ENCODE measurements at regions of chr2 and their contacts with region 1.

Region 1: DNA sequence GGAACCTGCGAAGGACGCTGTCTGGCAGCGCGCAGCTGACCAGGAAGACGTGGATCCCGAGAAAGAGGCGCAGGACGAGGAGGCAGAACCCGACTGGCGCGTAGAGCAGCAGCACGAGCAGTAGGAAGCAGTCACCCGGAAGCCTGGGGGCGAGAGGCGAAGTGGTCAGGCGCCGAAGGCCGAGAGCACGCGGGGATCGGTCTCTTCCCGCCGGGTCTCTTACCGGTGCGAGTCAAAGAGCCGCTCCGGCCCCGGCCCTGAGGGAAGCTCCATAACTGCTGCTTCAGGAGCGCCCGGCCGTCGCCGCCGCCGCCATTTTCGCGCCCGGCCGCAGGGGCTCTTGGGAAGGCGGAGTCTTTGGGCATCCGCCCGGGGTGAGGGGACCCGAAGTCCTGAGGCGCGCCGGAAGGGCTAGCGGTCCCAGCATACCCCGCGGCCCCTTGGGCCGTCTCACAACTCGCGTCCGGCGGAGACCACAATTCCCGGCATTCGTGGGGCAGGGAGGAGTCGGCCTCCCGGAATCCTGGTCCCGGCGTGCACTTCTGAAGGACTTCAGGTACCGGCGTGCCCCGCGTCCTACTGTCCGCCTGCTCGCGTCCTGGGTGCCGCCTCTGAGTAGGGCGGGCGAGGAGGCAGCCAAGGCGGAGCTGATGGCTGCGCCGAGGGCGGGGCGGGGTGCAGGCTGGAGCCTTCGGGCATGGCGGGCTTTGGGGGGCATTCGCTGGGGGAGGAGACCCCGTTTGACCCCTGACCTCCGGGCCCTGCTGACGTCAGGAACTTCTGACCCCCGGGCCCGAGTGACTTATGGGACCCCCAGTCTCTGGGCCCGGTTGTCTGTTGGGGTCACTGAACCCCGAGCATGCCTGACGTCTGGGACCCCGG is at the starts of genes AUP1 and HTRA2:
- DNase-seq: peak; percentile 83 to 91
- ATAC-seq: peak; percentile 75 to 90 (median 77)
- H3K4me3 ChIP-seq: peak within 1 kb of the TSS; percentile 92
- H3K4me3 Mint-ChIP-seq: peak within 1 kb of the TSS; percentile 96
- H3K27ac ChIP-seq: peak within 1 kb of the TSS; percentile 95
- H3K27ac Mint-ChIP-seq: peak within 1 kb of the TSS; percentile 94 to 95
- H3K4me1 ChIP-seq: peaks cover 31% of the 10 kb centered on the region
- H3K4me1 Mint-ChIP-seq: peaks cover 32 to 44% of the 10 kb centered on the region in 2 donors
- H3K27me3 ChIP-seq: no peaks in the 10 kb centered on the region
- H3K27me3 Mint-ChIP-seq: no peaks in the 10 kb centered on the region
- CTCF ChIP-seq: no peak
- total RNA-seq, gene AUP1: 234 to 242 (median 237) TPM
- total RNA-seq, gene HTRA2: 32.1 to 47.6 (median 45.2) TPM

Region 2: DNA sequence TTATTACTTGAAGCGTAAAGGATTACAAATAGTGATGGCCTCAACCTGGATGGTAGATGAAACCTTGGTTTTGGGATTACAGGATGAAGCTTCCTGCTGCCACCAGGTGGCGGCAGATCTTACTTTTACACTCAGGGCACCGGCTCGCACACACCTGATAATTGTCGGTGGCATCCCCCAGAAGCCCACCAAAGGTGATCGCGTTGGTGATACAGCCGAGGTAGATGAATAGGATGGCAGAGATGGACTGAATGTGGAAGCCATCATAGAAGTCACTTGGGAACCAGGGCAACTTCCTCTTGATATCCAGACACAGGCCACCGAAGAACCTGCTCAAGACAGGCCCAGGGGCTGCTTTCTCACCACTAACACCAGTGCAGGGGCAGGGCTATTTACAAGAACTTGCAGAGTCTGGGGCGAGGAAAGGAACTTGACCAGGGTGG is 279.4 kb before region 1 on chr2:
- intact Hi-C with region 1: loop called (anchors 2 kb)
- DNase-seq: peak; percentile 46 to 83
- ATAC-seq: peak in 2 of 3 donors; percentile 63 to 68
- H3K4me3 ChIP-seq: no peak overlapping the region
- H3K4me3 Mint-ChIP-seq: no peak overlapping the region
- H3K27ac ChIP-seq: no peak overlapping the region
- H3K27ac Mint-ChIP-seq: no peak overlapping the region
- H3K4me1 ChIP-seq: peaks cover 5% of the 10 kb centered on the region
- H3K4me1 Mint-ChIP-seq: peaks cover 0 to 3% of the 10 kb centered on the region in 2 donors
- H3K27me3 ChIP-seq: no peaks in the 10 kb centered on the region
- H3K27me3 Mint-ChIP-seq: no peaks in the 10 kb centered on the region
- CTCF ChIP-seq: peak; percentile 81

Region 3: DNA sequence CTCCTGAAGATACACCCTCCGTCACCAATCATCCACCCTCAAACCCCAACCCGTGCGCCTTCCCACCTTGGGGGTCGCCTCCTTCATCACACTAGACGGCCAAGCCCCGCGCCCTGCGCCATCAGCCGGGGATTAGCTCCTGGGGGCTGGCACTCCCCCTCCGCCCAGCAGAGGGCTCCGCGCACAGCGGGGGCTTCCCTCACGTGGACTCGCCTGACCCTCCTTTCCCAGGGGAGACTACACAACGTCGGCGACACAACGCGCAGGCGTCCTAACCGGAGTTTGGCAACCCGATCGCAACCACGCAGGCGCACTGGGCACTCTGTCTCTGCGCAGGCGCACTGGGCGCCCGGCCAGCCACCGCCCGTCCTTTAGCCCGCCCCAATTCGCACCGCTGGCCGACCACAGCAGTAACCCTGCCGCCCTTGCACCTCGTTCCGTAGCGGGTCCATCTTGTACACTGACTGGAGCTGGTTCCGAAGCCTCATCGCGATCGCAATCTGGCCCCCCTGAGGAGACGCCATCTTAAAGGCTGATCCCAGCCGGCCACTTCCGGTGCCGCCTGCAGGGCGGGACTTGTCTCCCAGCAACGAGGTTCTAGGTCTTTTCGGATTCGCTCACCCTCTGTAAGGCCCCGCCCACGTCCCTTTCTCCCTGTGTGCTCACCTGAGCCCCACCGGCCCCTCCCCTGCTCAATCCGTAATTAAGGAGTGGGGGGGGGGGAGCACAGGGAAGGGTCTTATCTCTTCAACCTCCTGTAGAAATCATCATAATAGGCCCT is 22.3 kb before region 1 on chr2 and contains the start of gene PCGF1:
- intact Hi-C with region 1: loop called (anchors 1 kb)
- DNase-seq: peak; percentile 99
- ATAC-seq: peak; percentile 88 to 97 (median 91)
- H3K4me3 ChIP-seq: peak within 1 kb of the TSS; percentile 86
- H3K4me3 Mint-ChIP-seq: peak within 1 kb of the TSS; percentile 100
- H3K27ac ChIP-seq: peak within 1 kb of the TSS; percentile 97
- H3K27ac Mint-ChIP-seq: peak within 1 kb of the TSS; percentile 100
- H3K4me1 ChIP-seq: peaks cover 46% of the 10 kb centered on the region
- H3K4me1 Mint-ChIP-seq: peaks cover 38 to 59% of the 10 kb centered on the region in 2 donors
- H3K27me3 ChIP-seq: peaks cover 12% of the 10 kb centered on the region
- H3K27me3 Mint-ChIP-seq: peaks cover 19 to 28% of the 10 kb centered on the region in 2 donors
- CTCF ChIP-seq: no peak
- total RNA-seq, gene PCGF1: 22.9 to 35.9 (median 33.2) TPM

Region 4: GRCh38 chr2:74515981-74516633 is 13.5 kb before region 1 on chr2:
- intact Hi-C with region 1: loop called (anchors 1 kb)
- DNase-seq: peak; percentile 65 to 79
- ATAC-seq: peak; percentile 79 to 88 (median 86)
- H3K4me3 ChIP-seq: peak overlapping the region; percentile 21
- H3K4me3 Mint-ChIP-seq: peak overlapping the region; percentile 86
- H3K27ac ChIP-seq: no peak overlapping the region
- H3K27ac Mint-ChIP-seq: no peak overlapping the region
- H3K4me1 ChIP-seq: peaks cover 31% of the 10 kb centered on the region
- H3K4me1 Mint-ChIP-seq: peaks cover 10 to 20% of the 10 kb centered on the region in 2 donors
- H3K27me3 ChIP-seq: peaks cover 65% of the 10 kb centered on the region
- H3K27me3 Mint-ChIP-seq: peaks cover 73 to 78% of the 10 kb centered on the region in 2 donors
- CTCF ChIP-seq: no peak

Measured in natural killer cell (primary cell).